Endothelial cell of umbilical vein (primary cell): ENCODE measurements at regions of chr6 and their contacts with region 1.

Region 1: GRCh38 chr6:28863604-28864320 is 60.0 kb downstream of the TRIM27 start:
- DNase-seq: peak; percentile 91
- H3K4me3 ChIP-seq: peak overlapping the region; percentile 64 to 91 (median 83)
- H3K27ac ChIP-seq: peak overlapping the region; percentile 9
- H3K4me1 ChIP-seq: peaks cover 16% of the 10 kb centered on the region
- H3K27me3 ChIP-seq: peaks cover 5% of the 10 kb centered on the region in 2 experiments
- CTCF ChIP-seq: no peak
- POLR2A ChIP-seq: no peak

Region 2: GRCh38 chr6:28816909-28817807 is 46.6 kb before region 1 on chr6:
- CTCF ChIA-PET with region 1: no interaction called
- POLR2A ChIA-PET with region 1: no interaction called
- dilution Hi-C with region 1: no loop called
- intact Hi-C with region 1: loop called (anchors 2 kb)
- DNase-seq: peak; percentile 26
- H3K4me3 ChIP-seq: peak overlapping the region in 1 of 3 experiments; percentile 30
- H3K27ac ChIP-seq: no peak overlapping the region
- H3K4me1 ChIP-seq: no peaks in the 10 kb centered on the region
- H3K27me3 ChIP-seq: peaks cover 55 to 57% of the 10 kb centered on the region in 2 experiments
- CTCF ChIP-seq: no peak
- POLR2A ChIP-seq: no peak

Region 3: DNA sequence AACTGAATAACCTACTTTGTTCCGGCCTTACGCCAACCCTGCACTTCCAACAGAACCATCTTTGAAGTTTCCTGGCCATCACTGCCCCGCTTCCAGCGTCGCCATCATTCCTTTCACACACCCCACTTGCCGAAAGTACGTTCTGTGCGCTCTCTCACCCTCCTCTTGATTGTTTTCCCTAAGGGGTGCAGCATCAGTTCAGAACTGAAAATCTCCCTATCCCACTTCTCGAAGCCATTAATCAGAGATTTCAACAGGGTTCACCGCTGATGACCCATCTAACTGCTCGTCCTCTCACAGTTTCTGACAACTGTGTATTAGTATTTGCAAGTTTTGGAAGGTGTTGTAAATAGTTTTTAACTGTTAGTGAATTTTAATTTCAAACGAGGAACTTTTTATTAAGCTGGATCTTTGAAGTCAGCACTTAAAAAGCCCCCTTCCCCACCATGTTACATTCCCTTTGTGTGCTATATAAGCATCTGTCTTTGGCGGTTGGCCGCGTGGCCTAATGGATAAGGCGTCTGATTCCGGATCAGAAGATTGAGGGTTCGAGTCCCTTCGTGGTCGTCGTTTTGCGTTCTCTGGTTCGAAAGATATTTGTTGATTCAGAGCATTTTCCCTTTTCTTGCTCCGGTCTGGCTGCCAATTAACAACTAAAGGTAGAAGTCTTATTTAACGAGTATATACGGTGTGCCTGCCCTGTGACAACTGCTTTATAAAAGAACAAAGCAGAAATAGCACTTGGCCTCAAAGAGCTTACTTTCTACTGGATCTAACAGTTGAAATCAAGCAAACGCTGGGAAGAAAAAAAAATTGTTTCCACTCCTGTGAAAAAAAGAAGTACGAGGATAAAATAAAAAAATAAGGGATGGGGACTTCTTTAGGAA is 17.4 kb after region 1 on chr6:
- CTCF ChIA-PET with region 1: interaction called, 4 read pairs
- POLR2A ChIA-PET with region 1: no interaction called
- dilution Hi-C with region 1: no loop called
- intact Hi-C with region 1: loop called (anchors 1 kb)
- DNase-seq: peak; percentile 84
- H3K4me3 ChIP-seq: peak overlapping the region; percentile 69 to 97 (median 86)
- H3K27ac ChIP-seq: no peak overlapping the region
- H3K4me1 ChIP-seq: peaks cover 2% of the 10 kb centered on the region
- H3K27me3 ChIP-seq: peaks cover 23 to 27% of the 10 kb centered on the region in 2 experiments
- CTCF ChIP-seq: no peak
- POLR2A ChIP-seq: no peak